Caco-2 (cell line): ENCODE measurements at regions of chr3 and their contacts with region 1.

Region 1: DNA sequence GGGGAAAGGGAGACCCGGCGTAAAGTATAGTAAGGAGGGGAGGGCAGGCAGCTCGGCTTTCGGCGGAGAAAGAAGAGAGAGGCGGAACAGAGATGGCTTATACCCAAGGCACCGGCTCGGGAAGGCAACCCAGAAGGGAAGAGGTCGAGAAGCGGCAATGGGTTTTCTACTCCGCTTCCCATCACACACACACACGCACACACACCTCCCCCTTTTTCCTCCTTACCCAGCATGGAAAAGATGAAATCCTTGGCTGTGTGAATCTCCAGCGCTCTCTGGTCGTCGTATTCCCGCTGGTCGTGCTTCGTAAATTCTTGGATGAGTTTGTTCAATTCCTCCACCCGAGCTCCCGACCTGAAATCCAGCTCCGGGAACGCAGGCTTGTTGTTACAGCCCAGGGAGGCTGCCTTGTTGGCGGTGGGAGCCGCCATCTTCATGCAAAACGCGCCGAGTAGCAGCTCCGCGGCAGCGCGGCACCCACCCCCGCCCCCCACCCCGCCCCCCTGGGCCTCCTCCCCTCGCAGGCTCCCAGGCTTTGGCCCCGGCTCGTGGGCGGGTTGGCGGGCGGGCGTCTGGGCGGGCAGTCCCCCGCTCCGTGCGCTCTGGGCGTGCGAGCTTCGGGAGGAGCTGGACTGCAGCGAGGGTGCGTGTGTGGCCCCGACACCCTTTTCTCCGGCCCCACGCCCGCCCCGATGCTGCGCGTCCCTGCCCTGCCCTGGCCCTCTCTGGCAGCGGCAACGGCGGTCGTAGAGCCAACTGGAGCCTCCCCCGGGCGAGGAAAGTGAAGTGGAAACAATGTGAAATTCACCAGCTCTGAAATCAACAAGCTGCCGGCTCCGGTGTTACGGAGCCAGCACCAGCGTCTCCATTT is at the start of gene MB21D2:
- DNase-seq: peak; percentile 84 to 86
- H3K4me3 ChIP-seq: peak within 1 kb of the TSS; percentile 95
- H3K4me3 Mint-ChIP-seq: peak within 1 kb of the TSS; percentile 100
- H3K27ac Mint-ChIP-seq: peak within 1 kb of the TSS; percentile 99
- H3K4me1 ChIP-seq: peaks cover 39% of the 10 kb centered on the region
- H3K4me1 Mint-ChIP-seq: peaks cover 34% of the 10 kb centered on the region
- H3K27me3 ChIP-seq: no peaks in the 10 kb centered on the region
- H3K27me3 Mint-ChIP-seq: no peaks in the 10 kb centered on the region
- CTCF ChIP-seq: no peak
- total RNA-seq, gene MB21D2: 10.6 and 11.0 TPM in 2 replicates

Region 2: GRCh38 chr3:192816351-192816750 is 101.3 kb before region 1 on chr3:
- CTCF ChIA-PET with region 1: interaction called, 7 read pairs
- POLR2A ChIA-PET with region 1: interaction called, 5 read pairs
- intact Hi-C with region 1: loop called (anchors 1 kb)
- DNase-seq: peak in 1 of 2 experiments; percentile 56
- H3K4me3 ChIP-seq: no peak overlapping the region
- H3K4me3 Mint-ChIP-seq: no peak overlapping the region
- H3K27ac Mint-ChIP-seq: no peak overlapping the region
- H3K4me1 ChIP-seq: peaks cover 29% of the 10 kb centered on the region
- H3K4me1 Mint-ChIP-seq: peaks cover 46% of the 10 kb centered on the region
- H3K27me3 ChIP-seq: no peaks in the 10 kb centered on the region
- H3K27me3 Mint-ChIP-seq: no peaks in the 10 kb centered on the region
- CTCF ChIP-seq: peak; percentile 55 to 77

Region 3: GRCh38 chr3:192850451-192850981 is 67.1 kb before region 1 on chr3:
- CTCF ChIA-PET with region 1: no interaction called
- POLR2A ChIA-PET with region 1: interaction called, 3 read pairs
- intact Hi-C with region 1: loop called (anchors 1 kb)
- DNase-seq: peak; percentile 85 to 94
- H3K4me3 ChIP-seq: peak overlapping the region; percentile 6; the same call in 1 of the 2 replicates
- H3K4me3 Mint-ChIP-seq: peak overlapping the region; percentile 68
- H3K27ac Mint-ChIP-seq: peak overlapping the region; percentile 94
- H3K4me1 ChIP-seq: peaks cover 50% of the 10 kb centered on the region
- H3K4me1 Mint-ChIP-seq: peaks cover 40% of the 10 kb centered on the region
- H3K27me3 ChIP-seq: no peaks in the 10 kb centered on the region
- H3K27me3 Mint-ChIP-seq: no peaks in the 10 kb centered on the region
- CTCF ChIP-seq: no peak

Region 4: GRCh38 chr3:192887047-192887446 is 30.6 kb before region 1 on chr3:
- CTCF ChIA-PET with region 1: interaction called, 14 read pairs
- POLR2A ChIA-PET with region 1: interaction called, 14 read pairs
- intact Hi-C with region 1: no loop called
- DNase-seq: peak; percentile 36 to 61
- H3K4me3 ChIP-seq: peak overlapping the region; percentile 11; the same call in 1 of the 2 replicates
- H3K4me3 Mint-ChIP-seq: peak overlapping the region; percentile 77
- H3K27ac Mint-ChIP-seq: peak overlapping the region; percentile 89
- H3K4me1 ChIP-seq: peaks cover 77% of the 10 kb centered on the region
- H3K4me1 Mint-ChIP-seq: peaks cover 47% of the 10 kb centered on the region
- H3K27me3 ChIP-seq: no peaks in the 10 kb centered on the region
- H3K27me3 Mint-ChIP-seq: no peaks in the 10 kb centered on the region
- CTCF ChIP-seq: no peak

Region 5: DNA sequence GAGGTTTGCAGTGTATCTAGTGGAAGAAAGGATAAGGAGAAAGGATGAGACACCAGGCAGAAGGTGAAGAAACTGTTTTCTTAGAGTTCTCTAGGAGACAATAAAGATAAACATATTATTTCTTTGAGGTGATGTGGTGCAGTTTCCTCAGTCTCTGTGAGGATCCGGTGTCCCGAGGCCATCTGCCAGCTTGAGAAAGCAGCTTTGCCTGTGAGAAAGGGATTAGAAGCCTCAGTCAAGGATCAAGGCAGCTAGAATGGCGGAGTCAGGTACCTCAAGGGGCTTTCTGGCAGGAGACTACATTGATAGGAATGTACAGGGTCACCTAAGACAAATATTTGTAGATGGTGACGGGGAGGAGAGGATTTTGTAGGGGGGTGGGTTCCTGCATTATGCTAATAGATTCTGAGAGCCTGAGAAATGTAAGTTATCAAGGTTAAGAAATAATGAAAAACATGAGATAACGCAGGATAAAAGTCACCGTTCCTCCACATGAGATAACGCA is 103.9 kb after region 1 on chr3:
- CTCF ChIA-PET with region 1: no interaction called
- POLR2A ChIA-PET with region 1: no interaction called
- intact Hi-C with region 1: loop called (anchors 1 kb)
- DNase-seq: peak; percentile 74 to 86
- H3K4me3 ChIP-seq: no peak overlapping the region
- H3K4me3 Mint-ChIP-seq: peak overlapping the region; percentile 0
- H3K27ac Mint-ChIP-seq: peak overlapping the region; percentile 25
- H3K4me1 ChIP-seq: peaks cover 22% of the 10 kb centered on the region
- H3K4me1 Mint-ChIP-seq: peaks cover 16% of the 10 kb centered on the region
- H3K27me3 ChIP-seq: no peaks in the 10 kb centered on the region
- H3K27me3 Mint-ChIP-seq: no peaks in the 10 kb centered on the region
- CTCF ChIP-seq: no peak

Region 6: DNA sequence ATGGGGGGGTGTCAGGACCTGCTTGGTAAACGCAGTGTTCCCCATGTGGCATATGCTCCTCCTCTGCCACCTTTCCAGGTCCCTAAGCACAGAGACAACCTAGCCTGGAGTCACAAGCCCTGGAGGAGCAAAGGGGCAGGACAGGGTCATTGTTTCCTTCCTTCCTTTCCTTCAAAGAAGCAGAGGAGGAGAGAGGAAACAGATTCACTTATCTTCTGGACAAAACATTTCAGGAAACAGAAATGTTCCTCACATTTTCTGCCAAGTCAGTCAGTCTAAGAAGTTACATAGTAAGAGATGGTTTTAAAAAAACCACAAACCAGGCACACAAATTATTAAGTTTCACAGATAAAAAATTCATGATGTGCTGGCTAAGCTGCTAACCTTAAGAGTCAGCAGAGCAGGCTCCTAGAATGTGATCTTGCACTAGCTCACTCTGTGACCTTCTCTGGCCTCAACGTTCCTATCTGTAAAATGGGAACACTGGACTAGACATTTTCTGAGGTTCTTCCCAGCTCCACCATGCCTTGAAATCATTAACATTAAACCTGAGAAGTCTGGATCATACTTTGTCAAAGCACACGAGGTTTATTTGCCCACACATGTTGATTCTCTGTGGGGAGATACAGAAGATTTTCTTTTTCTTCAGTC is 413.0 kb after region 1 on chr3:
- CTCF ChIA-PET with region 1: no interaction called
- POLR2A ChIA-PET with region 1: no interaction called
- intact Hi-C with region 1: loop called (anchors 1 kb)
- DNase-seq: no peak
- H3K4me3 ChIP-seq: no peak overlapping the region
- H3K4me3 Mint-ChIP-seq: no peak overlapping the region
- H3K27ac Mint-ChIP-seq: no peak overlapping the region
- H3K4me1 ChIP-seq: no peaks in the 10 kb centered on the region
- H3K4me1 Mint-ChIP-seq: peaks cover 7% of the 10 kb centered on the region
- H3K27me3 ChIP-seq: no peaks in the 10 kb centered on the region
- H3K27me3 Mint-ChIP-seq: no peaks in the 10 kb centered on the region
- CTCF ChIP-seq: no peak